Sigmoid colon (tissue), 7 donors: ENCODE measurements at regions of chr11 and their contacts with region 1.

Region 1: GRCh38 chr11:110092515-110093404 is at the start of gene ZC3H12C:
- DNase-seq: peak; percentile 95
- H3K4me3 ChIP-seq: peak within 1 kb of the TSS; percentile 75 to 84 (median 80)
- H3K27ac ChIP-seq: peak within 1 kb of the TSS; percentile 97 to 99 (median 97)
- H3K4me1 ChIP-seq: peaks cover 0 to 34% (median 19%) of the 10 kb centered on the region in 4 donors
- H3K27me3 ChIP-seq: no peaks in the 10 kb centered on the region
- CTCF ChIP-seq: peak in 1 of 4 experiments; percentile 48
- EP300 ChIP-seq: no peak
- POLR2A ChIP-seq: no peak
- total RNA-seq, gene ZC3H12C: 16.4 to 21.7 (median 18.8) TPM

Region 2: DNA sequence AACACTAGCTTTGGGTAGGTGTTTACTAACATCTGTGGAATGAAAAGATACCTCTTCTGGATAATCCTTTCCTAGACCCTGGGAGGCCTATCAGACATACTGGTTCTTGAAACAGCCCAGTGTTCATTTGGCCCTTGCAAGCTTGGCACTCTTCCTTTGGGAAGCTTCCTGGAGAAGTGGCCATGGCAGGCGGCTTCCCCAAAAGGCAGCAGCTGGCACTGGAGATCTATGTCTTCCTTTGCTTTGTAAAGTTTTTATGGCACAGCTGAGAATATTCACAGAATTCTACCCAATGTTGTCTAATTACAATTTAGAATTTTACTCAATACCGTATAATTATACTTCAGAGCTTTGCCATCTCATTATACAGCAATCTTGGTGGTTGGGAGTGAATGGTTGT is 870.0 kb before region 1 on chr11:
- intact Hi-C with region 1: no loop called
- DNase-seq: no peak
- H3K4me3 ChIP-seq: no peak overlapping the region
- H3K27ac ChIP-seq: no peak overlapping the region
- H3K4me1 ChIP-seq: no peaks in the 10 kb centered on the region
- H3K27me3 ChIP-seq: no peaks in the 10 kb centered on the region
- CTCF ChIP-seq: no peak
- EP300 ChIP-seq: no peak
- POLR2A ChIP-seq: no peak

Region 3: GRCh38 chr11:109658190-109658589 is 434.6 kb before region 1 on chr11:
- intact Hi-C with region 1: no loop called
- DNase-seq: no peak
- H3K4me3 ChIP-seq: no peak overlapping the region
- H3K27ac ChIP-seq: no peak overlapping the region
- H3K4me1 ChIP-seq: no peaks in the 10 kb centered on the region
- H3K27me3 ChIP-seq: no peaks in the 10 kb centered on the region
- CTCF ChIP-seq: no peak
- EP300 ChIP-seq: no peak
- POLR2A ChIP-seq: no peak

Region 4: DNA sequence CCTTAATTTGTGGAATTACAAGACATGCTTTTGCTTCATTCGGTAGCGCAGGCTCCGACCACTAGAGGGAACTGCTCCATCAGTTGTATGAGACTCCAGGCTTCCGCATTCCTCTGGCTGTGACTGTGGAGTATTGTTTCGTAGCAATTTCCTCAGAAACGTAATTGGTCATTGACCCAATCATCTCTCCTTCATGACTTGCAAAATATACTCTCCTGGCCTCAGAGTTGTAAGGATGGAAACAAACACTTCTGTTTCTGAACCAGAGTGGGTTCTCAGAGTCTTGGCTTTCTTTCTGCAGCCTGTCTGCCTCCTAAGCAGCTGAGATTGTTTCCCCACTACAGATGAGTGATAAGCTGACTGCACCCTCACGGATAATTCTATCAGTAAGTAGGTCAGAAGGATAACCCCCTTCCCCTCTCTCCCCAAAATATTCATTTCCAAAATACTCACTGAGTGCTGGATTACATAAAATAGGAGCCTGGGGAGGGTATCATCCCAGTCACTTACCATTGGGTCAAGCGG is 146.4 kb before region 1 on chr11:
- intact Hi-C with region 1: loop called (anchors 5 kb)
- DNase-seq: peak; percentile 89
- H3K4me3 ChIP-seq: peak overlapping the region in 3 of 4 donors; percentile 20 to 38 (median 38)
- H3K27ac ChIP-seq: peak overlapping the region; percentile 54 to 62 (median 58)
- H3K4me1 ChIP-seq: peaks cover 0 to 5% (median 2%) of the 10 kb centered on the region in 4 donors
- H3K27me3 ChIP-seq: no peaks in the 10 kb centered on the region
- CTCF ChIP-seq: peak; percentile 74 to 89 (median 85)
- EP300 ChIP-seq: no peak
- POLR2A ChIP-seq: no peak

Region 5: GRCh38 chr11:110185121-110185591 is 92.4 kb after region 1 on chr11:
- intact Hi-C with region 1: no loop called
- DNase-seq: no peak
- H3K4me3 ChIP-seq: no peak overlapping the region
- H3K27ac ChIP-seq: no peak overlapping the region
- H3K4me1 ChIP-seq: no peaks in the 10 kb centered on the region
- H3K27me3 ChIP-seq: no peaks in the 10 kb centered on the region
- CTCF ChIP-seq: no peak
- EP300 ChIP-seq: no peak
- POLR2A ChIP-seq: no peak

Region 6: DNA sequence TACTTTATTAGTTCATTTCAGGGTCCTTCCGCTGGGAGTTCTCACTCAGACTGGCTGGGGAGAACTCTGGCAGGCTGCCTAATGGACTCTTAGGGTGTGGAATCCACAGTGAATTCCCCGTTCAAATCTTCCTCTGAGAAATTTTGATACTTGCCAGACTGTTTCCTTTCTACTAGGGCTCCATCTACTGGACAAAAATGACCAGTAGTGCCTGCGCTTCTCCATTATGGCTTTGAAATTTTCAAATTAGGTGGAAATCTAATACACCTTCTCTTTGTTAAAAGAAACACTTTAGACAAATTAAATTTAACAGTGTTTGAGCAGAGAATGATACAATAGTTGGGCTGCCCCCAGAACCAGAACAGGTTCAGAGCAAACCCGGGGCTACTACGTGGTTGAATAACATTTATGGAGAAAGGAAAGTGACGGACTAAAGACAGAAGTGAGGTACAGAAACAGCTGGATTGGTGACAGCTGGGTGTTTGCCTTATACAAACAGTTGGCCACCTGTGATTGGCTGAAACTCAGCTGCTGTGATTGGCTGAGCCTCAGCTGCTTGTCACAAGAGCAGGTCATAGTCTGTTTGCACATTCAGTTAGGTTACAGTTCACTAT is 284.1 kb after region 1 on chr11:
- intact Hi-C with region 1: loop called (anchors 10 kb)
- DNase-seq: peak; percentile 87
- H3K4me3 ChIP-seq: peak overlapping the region in 2 of 4 donors; percentile 14 to 30
- H3K27ac ChIP-seq: peak overlapping the region; percentile 21 to 63 (median 49)
- H3K4me1 ChIP-seq: peaks cover 0 to 12% (median 5%) of the 10 kb centered on the region in 4 donors
- H3K27me3 ChIP-seq: no peaks in the 10 kb centered on the region
- CTCF ChIP-seq: peak; percentile 52 to 76 (median 60)
- EP300 ChIP-seq: no peak
- POLR2A ChIP-seq: no peak

Region 7: GRCh38 chr11:110429731-110430266 is 337.0 kb after region 1 on chr11 and contains the start of gene FDX1:
- intact Hi-C with region 1: loop called (anchors 2 kb)
- DNase-seq: peak; percentile 87
- H3K4me3 ChIP-seq: peak within 1 kb of the TSS; percentile 55 to 80 (median 74)
- H3K27ac ChIP-seq: peak within 1 kb of the TSS; percentile 90 to 93 (median 92)
- H3K4me1 ChIP-seq: peaks cover 0 to 36% (median 26%) of the 10 kb centered on the region in 4 donors
- H3K27me3 ChIP-seq: no peaks in the 10 kb centered on the region
- CTCF ChIP-seq: peak in 2 of 4 experiments; percentile 34 to 71
- EP300 ChIP-seq: no peak
- POLR2A ChIP-seq: no peak
- total RNA-seq, gene FDX1: 12.5 to 13.8 (median 13.5) TPM